ENCODE measurements at regions of chr2 and their contacts with region 1.

Region 1: GRCh38 chr2:64052468-64053241 is 33.4 kb upstream of the VPS54 start:
- H3K4me3 Mint-ChIP-seq: no peak overlapping the region
- H3K27ac Mint-ChIP-seq: no peak overlapping the region
- H3K4me1 Mint-ChIP-seq: peaks cover 4% of the 10 kb centered on the region
- H3K27me3 Mint-ChIP-seq: peaks cover 3% of the 10 kb centered on the region

Region 2: GRCh38 chr2:64137996-64138395 is 85.3 kb after region 1 on chr2:
- intact Hi-C with region 1: loop called (anchors 1 kb)
- H3K4me3 Mint-ChIP-seq: peak overlapping the region; percentile 67
- H3K27ac Mint-ChIP-seq: peak overlapping the region; percentile 88
- H3K4me1 Mint-ChIP-seq: peaks cover 54% of the 10 kb centered on the region
- H3K27me3 Mint-ChIP-seq: no peaks in the 10 kb centered on the region

Region 3: GRCh38 chr2:64330281-64331113 is 277.8 kb after region 1 on chr2:
- intact Hi-C with region 1: loop called (anchors 1 kb)
- H3K4me3 Mint-ChIP-seq: no peak overlapping the region
- H3K27ac Mint-ChIP-seq: no peak overlapping the region
- H3K4me1 Mint-ChIP-seq: peaks cover 29% of the 10 kb centered on the region
- H3K27me3 Mint-ChIP-seq: peaks cover 2% of the 10 kb centered on the region

Region 4: GRCh38 chr2:64488050-64488974 is 435.7 kb after region 1 on chr2:
- intact Hi-C with region 1: loop called (anchors 10 kb)
- H3K4me3 Mint-ChIP-seq: no peak overlapping the region
- H3K27ac Mint-ChIP-seq: no peak overlapping the region
- H3K4me1 Mint-ChIP-seq: peaks cover 20% of the 10 kb centered on the region
- H3K27me3 Mint-ChIP-seq: peaks cover 17% of the 10 kb centered on the region

Region 5: GRCh38 chr2:64562148-64562784 is 509.6 kb after region 1 on chr2:
- intact Hi-C with region 1: loop called (anchors 10 kb)
- H3K4me3 Mint-ChIP-seq: no peak overlapping the region
- H3K27ac Mint-ChIP-seq: no peak overlapping the region
- H3K4me1 Mint-ChIP-seq: peaks cover 6% of the 10 kb centered on the region
- H3K27me3 Mint-ChIP-seq: no peaks in the 10 kb centered on the region

Measured in dendritic cell treated with granulocyte-macrophage colony-stimulating factor and Interleukin-4, amounts not matched to agents 40 ng/mL and 50 ng/mL, for 4 days (primary cell).